OCI-LY7 (cell line): ENCODE measurements at regions of chr1 and their contacts with region 1.

Region 1: DNA sequence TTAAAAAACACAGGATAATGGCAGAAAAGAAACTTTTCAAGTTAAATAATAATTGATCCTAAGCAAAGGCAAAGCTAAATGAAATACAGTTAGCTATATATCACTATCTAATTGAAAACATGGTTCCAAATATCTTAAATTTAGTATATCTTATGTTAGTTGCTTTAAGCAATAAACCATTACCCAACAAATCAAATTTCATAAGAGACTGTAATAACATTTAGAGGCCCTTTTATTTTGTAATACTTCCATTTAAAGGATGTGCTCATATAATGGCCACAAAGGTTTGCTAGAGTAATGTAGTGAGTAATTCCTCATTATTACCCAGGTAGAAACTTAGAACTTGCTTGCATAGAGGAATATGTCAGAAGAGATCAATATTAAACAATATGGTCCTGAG is 32.3 kb downstream of the RPL5 start:
- DNase-seq: no peak
- H3K4me3 ChIP-seq: no peak overlapping the region
- H3K27ac ChIP-seq: no peak overlapping the region
- H3K4me1 ChIP-seq: peaks cover 14% of the 10 kb centered on the region
- CTCF ChIP-seq: no peak

Region 2: GRCh38 chr1:92551916-92552315 is 312.2 kb before region 1 on chr1:
- CTCF ChIA-PET with region 1: no interaction called
- POLR2A ChIA-PET with region 1: no interaction called
- intact Hi-C with region 1: no loop called
- DNase-seq: no peak
- H3K4me3 ChIP-seq: no peak overlapping the region
- H3K27ac ChIP-seq: no peak overlapping the region
- H3K4me1 ChIP-seq: no peaks in the 10 kb centered on the region
- CTCF ChIP-seq: no peak

Region 3: DNA sequence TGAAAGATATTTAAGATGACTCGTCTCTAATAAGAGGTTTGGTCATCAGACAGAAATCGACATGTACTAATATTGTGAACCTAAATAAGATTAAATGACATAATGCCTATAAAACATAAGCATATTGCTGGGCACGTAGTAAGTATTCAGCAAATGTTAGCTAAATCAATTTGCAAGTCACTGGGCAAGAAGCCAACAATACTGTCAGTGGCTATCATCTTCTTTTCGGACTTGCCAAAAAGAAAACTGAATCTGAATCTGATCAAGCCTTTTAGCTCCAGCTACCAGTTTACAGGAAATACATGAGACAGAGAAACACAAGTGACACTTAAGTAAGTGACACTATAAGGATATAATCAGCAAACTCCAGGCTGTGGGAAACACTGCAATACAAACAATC is 13.7 kb after region 1 on chr1:
- CTCF ChIA-PET with region 1: interaction called, 3 read pairs
- POLR2A ChIA-PET with region 1: interaction called, 17 read pairs
- intact Hi-C with region 1: no loop called
- DNase-seq: peak; percentile 50
- H3K4me3 ChIP-seq: peak overlapping the region; percentile 54
- H3K27ac ChIP-seq: peak overlapping the region; percentile 86
- H3K4me1 ChIP-seq: peaks cover 45% of the 10 kb centered on the region
- CTCF ChIP-seq: no peak